ENCODE measurements at regions of chr15 and their contacts with region 1.

Region 1: GRCh38 chr15:67359431-67360082 is 105.0 kb downstream of the IQCH start:
- DNase-seq: no peak
- ATAC-seq: no peak
- H3K4me3 Mint-ChIP-seq: no peak overlapping the region
- H3K27ac Mint-ChIP-seq: no peak overlapping the region
- H3K4me1 Mint-ChIP-seq: no peaks in the 10 kb centered on the region
- H3K27me3 Mint-ChIP-seq: peaks cover 1% of the 10 kb centered on the region
- CTCF ChIP-seq: no peak

Region 2: DNA sequence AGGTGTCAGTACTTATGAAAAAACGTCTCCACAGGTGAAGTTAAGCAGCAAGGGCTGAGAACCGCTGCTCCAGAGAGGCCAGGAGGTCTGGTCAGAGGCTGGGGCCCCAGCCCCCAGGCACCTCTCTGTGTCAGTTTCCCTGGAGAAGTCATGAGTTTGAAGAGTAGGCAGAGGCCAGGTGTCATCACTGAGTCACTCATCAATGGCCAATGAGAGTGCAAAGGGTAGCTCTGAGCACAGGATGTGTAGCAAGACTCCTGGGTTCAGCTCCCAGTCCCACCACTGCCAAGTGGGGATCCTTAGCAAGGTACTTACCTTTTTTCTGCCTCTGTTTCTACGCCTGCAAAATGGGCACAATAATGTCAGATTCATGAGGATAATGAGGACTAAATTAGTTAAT is 1267.2 kb after region 1 on chr15:
- CTCF ChIA-PET with region 1: no interaction called
- POLR2A ChIA-PET with region 1: no interaction called
- intact Hi-C with region 1: loop called (anchors 5 kb)
- DNase-seq: no peak
- ATAC-seq: peak; percentile 56
- H3K4me3 Mint-ChIP-seq: no peak overlapping the region
- H3K27ac Mint-ChIP-seq: no peak overlapping the region
- H3K4me1 Mint-ChIP-seq: no peaks in the 10 kb centered on the region
- H3K27me3 Mint-ChIP-seq: peaks cover 11% of the 10 kb centered on the region
- CTCF ChIP-seq: no peak